ENCODE measurements at regions of chr1 and their contacts with region 1.

Region 1: DNA sequence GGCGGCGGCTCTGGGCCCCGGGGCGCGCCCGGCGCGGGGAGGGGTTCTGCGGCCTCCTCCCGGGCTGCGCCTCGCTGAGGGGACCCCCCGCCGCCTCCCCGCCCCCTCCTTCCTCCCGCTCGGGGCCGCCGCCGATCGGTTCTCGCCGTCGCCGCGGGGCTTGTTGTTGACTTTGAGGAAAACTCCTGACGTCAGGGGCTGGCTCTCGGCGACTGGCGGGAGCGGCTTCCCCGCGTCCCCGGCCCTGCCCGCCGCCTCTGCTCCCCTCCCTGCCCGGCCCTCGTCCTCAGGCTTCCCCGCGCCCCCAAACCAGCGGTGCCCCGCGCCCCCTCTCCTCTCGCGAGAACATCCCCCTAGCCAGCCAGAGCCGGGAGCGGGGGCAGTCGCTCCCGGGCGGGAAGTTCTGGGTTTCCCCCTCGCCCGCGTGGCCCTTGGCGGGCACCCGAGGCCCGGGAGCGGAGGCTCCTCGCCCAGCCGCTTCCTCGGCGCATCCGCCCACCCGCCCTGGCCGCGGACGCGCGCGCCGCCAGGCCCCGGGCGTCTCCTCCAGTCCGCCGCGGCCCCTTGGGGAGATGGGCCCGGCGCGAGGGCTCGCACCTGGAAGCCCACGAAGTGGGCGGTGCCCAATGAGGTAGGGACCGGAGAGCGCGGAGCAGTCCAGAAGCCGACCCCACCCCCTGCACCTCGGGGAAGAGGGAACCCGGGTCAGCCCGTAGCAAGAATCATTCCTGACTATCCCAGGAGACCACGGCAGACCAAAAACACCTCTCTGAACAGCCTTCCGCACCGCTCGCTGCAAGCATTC is 611 bp upstream of the AKT3 start:
- DNase-seq: peak; percentile 79 to 88 (median 84)
- ATAC-seq: peak; percentile 64
- H3K4me3 ChIP-seq: peak overlapping the region; percentile 75
- H3K4me3 Mint-ChIP-seq: peak overlapping the region; percentile 90 to 97 (median 93)
- H3K27ac ChIP-seq: peak overlapping the region; percentile 97
- H3K27ac Mint-ChIP-seq: peak overlapping the region; percentile 88 to 99 (median 93)
- H3K4me1 ChIP-seq: peaks cover 4 to 5% of the 10 kb centered on the region in 2 donors
- H3K4me1 Mint-ChIP-seq: peaks cover 8 to 47% (median 30%) of the 10 kb centered on the region in 7 donors
- H3K27me3 ChIP-seq: no peaks in the 10 kb centered on the region
- H3K27me3 Mint-ChIP-seq: peaks cover 0 to 59% (median 0%) of the 10 kb centered on the region in 5 donors

Region 2: DNA sequence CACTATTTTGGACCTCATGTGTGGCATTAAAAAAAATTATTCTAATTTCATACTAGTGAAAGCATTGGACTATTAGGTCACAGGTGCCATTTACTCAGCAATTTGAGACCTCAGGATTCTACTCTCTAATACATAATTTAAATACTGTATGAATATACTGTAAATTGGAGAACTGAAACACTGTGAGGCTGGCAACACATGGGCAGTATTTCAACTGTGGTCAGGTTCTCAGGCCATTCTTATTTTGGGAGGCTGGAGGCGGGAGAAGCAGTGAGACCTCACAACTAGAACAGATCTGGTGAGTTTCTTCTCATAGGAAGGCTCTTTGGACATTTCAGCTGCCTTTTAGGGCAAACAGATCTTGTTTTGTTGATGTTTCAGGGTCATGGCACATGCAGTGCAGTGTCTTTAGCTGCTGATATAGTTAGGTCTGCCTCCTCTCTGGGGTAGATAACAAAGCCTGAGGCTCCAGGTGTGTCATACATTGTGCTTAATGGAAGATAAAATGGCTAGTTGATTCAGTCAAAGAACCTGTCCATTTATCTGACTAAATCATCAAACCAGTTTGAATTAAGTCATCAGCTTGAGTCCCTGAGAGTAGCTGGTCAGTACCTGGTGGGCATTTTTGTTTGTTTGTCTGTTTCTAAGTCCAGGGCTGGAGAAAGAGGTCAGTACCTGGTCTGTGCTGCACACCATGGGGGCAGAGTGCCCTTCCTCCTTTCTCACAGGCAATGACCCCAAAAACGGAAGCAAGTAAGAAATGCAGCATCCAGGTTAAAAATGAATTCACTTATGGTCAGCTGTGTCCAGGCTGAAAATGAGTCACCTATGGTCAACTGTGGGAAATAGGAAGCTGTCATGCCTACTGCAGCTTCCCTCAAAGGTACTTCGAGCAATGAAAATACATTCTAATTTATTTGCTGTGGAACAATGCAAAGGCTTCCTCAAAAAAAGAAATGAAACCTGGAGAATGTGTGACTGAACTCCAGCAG is 378.6 kb before region 1 on chr1:
- CTCF ChIA-PET with region 1: no interaction called
- POLR2A ChIA-PET with region 1: no interaction called
- intact Hi-C with region 1: no loop called
- DNase-seq: no peak
- ATAC-seq: peak; percentile 60
- H3K4me3 ChIP-seq: no peak overlapping the region
- H3K4me3 Mint-ChIP-seq: peak overlapping the region in 2 of 10 donors; percentile 41 to 85
- H3K27ac ChIP-seq: no peak overlapping the region
- H3K27ac Mint-ChIP-seq: peak overlapping the region in 2 of 9 donors; percentile 26 to 63
- H3K4me1 ChIP-seq: no peaks in the 10 kb centered on the region
- H3K4me1 Mint-ChIP-seq: peaks cover 9 to 20% (median 13%) of the 10 kb centered on the region in 7 donors
- H3K27me3 ChIP-seq: no peaks in the 10 kb centered on the region
- H3K27me3 Mint-ChIP-seq: no peaks in the 10 kb centered on the region

Region 3: GRCh38 chr1:243596431-243597062 is 254.1 kb before region 1 on chr1:
- CTCF ChIA-PET with region 1: no interaction called
- POLR2A ChIA-PET with region 1: no interaction called
- intact Hi-C with region 1: loop called in 1 of 2 experiments (anchors 5 kb)
- DNase-seq: peak in 1 of 9 donors; percentile 36
- ATAC-seq: peak; percentile 81
- H3K4me3 ChIP-seq: no peak overlapping the region
- H3K4me3 Mint-ChIP-seq: peak overlapping the region in 4 of 10 donors; percentile 6 to 73 (median 44)
- H3K27ac ChIP-seq: no peak overlapping the region
- H3K27ac Mint-ChIP-seq: peak overlapping the region in 5 of 9 donors; percentile 28 to 89 (median 40)
- H3K4me1 ChIP-seq: peaks cover 4 to 19% of the 10 kb centered on the region in 2 donors
- H3K4me1 Mint-ChIP-seq: peaks cover 23 to 48% (median 32%) of the 10 kb centered on the region in 7 donors
- H3K27me3 ChIP-seq: no peaks in the 10 kb centered on the region
- H3K27me3 Mint-ChIP-seq: no peaks in the 10 kb centered on the region

Region 4: GRCh38 chr1:243837907-243838535 is 12.6 kb before region 1 on chr1:
- CTCF ChIA-PET with region 1: interaction called, 4 read pairs
- POLR2A ChIA-PET with region 1: interaction called, 12 read pairs
- intact Hi-C with region 1: loop called (anchors 1 kb)
- DNase-seq: peak in 7 of 9 donors; percentile 22 to 72 (median 49)
- ATAC-seq: peak; percentile 88
- H3K4me3 ChIP-seq: no peak overlapping the region
- H3K4me3 Mint-ChIP-seq: peak overlapping the region in 9 of 10 donors; percentile 22 to 74 (median 58)
- H3K27ac ChIP-seq: peak overlapping the region; percentile 40
- H3K27ac Mint-ChIP-seq: peak overlapping the region; percentile 65 to 94 (median 83)
- H3K4me1 ChIP-seq: peaks cover 10 to 29% of the 10 kb centered on the region in 2 donors
- H3K4me1 Mint-ChIP-seq: peaks cover 14 to 73% (median 59%) of the 10 kb centered on the region in 7 donors
- H3K27me3 ChIP-seq: no peaks in the 10 kb centered on the region
- H3K27me3 Mint-ChIP-seq: no peaks in the 10 kb centered on the region

Region 5: GRCh38 chr1:243864913-243865312 is 14.3 kb after region 1 on chr1:
- CTCF ChIA-PET with region 1: no interaction called
- POLR2A ChIA-PET with region 1: no interaction called
- intact Hi-C with region 1: no loop called
- DNase-seq: no peak
- ATAC-seq: no peak
- H3K4me3 ChIP-seq: no peak overlapping the region
- H3K4me3 Mint-ChIP-seq: no peak overlapping the region
- H3K27ac ChIP-seq: no peak overlapping the region
- H3K27ac Mint-ChIP-seq: no peak overlapping the region
- H3K4me1 ChIP-seq: no peaks in the 10 kb centered on the region
- H3K4me1 Mint-ChIP-seq: no peaks in the 10 kb centered on the region
- H3K27me3 ChIP-seq: no peaks in the 10 kb centered on the region
- H3K27me3 Mint-ChIP-seq: peaks cover 0 to 3% (median 1%) of the 10 kb centered on the region in 5 donors

Region 6: GRCh38 chr1:244074559-244075171 is 224.0 kb after region 1 on chr1:
- CTCF ChIA-PET with region 1: no interaction called
- POLR2A ChIA-PET with region 1: interaction called, 10 read pairs
- intact Hi-C with region 1: loop called in 1 of 2 experiments (anchors 1 kb)
- DNase-seq: peak; percentile 36 to 91 (median 86)
- ATAC-seq: peak; percentile 96
- H3K4me3 ChIP-seq: peak overlapping the region; percentile 45
- H3K4me3 Mint-ChIP-seq: peak overlapping the region; percentile 75 to 91 (median 88)
- H3K27ac ChIP-seq: peak overlapping the region; percentile 73
- H3K27ac Mint-ChIP-seq: peak overlapping the region; percentile 50 to 99 (median 97)
- H3K4me1 ChIP-seq: peaks cover 16 to 32% of the 10 kb centered on the region in 2 donors
- H3K4me1 Mint-ChIP-seq: peaks cover 19 to 64% (median 54%) of the 10 kb centered on the region in 7 donors
- H3K27me3 ChIP-seq: no peaks in the 10 kb centered on the region
- H3K27me3 Mint-ChIP-seq: peaks cover 0 to 20% (median 0%) of the 10 kb centered on the region in 5 donors

Region 7: DNA sequence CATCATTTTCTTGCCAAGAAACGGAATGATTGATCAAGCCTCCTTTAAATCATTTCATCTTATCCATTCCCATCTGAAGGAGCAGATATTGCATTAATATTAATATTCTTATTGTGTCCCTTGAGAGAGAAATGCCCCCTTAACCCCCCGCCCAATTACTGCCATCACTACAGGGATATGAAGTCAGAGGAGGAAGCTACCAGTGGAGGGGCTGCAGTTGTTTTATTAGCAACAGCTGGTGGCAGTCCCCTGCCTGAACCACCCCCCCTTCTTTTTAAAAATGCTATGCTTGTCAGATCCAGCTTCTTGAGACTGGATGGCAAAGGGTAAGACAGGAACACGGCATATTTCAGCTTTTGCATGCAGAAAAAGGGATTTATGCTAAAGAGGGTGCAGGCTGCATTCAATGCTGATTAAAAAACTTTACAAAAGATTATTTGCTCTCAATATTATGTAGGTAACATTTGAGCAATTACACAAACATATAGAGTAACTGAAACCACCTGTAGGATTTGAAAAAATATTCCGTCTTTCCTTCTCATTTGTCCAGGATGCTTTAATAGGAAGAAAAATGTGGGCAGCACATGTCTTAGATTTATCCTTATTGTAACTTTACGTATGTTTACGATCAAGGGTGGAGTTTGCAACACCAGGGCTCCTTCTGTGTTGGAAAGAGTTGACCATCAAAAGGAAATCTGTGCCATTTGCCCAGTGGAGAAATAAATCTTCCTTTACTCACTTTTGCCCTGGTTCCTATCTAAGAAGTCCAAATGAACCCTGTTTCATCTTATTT is 278.1 kb after region 1 on chr1:
- CTCF ChIA-PET with region 1: no interaction called
- POLR2A ChIA-PET with region 1: no interaction called
- intact Hi-C with region 1: no loop called
- DNase-seq: no peak
- ATAC-seq: no peak
- H3K4me3 ChIP-seq: no peak overlapping the region
- H3K4me3 Mint-ChIP-seq: no peak overlapping the region
- H3K27ac ChIP-seq: no peak overlapping the region
- H3K27ac Mint-ChIP-seq: no peak overlapping the region
- H3K4me1 ChIP-seq: no peaks in the 10 kb centered on the region
- H3K4me1 Mint-ChIP-seq: peaks cover 0 to 15% (median 4%) of the 10 kb centered on the region in 7 donors
- H3K27me3 ChIP-seq: no peaks in the 10 kb centered on the region
- H3K27me3 Mint-ChIP-seq: peaks cover 0 to 21% (median 0%) of the 10 kb centered on the region in 5 donors

Region 8: GRCh38 chr1:244319283-244320132 is 468.9 kb after region 1 on chr1:
- CTCF ChIA-PET with region 1: no interaction called
- POLR2A ChIA-PET with region 1: no interaction called
- intact Hi-C with region 1: loop called in 1 of 2 experiments (anchors 5 kb)
- DNase-seq: peak in 1 of 9 donors; percentile 62
- ATAC-seq: peak; percentile 86
- H3K4me3 ChIP-seq: peak overlapping the region; percentile 9
- H3K4me3 Mint-ChIP-seq: peak overlapping the region in 4 of 10 donors; percentile 20 to 76 (median 36)
- H3K27ac ChIP-seq: no peak overlapping the region
- H3K27ac Mint-ChIP-seq: peak overlapping the region in 6 of 9 donors; percentile 20 to 87 (median 53)
- H3K4me1 ChIP-seq: peaks cover 0 to 51% of the 10 kb centered on the region in 2 donors
- H3K4me1 Mint-ChIP-seq: peaks cover 8 to 49% (median 9%) of the 10 kb centered on the region in 7 donors
- H3K27me3 ChIP-seq: no peaks in the 10 kb centered on the region
- H3K27me3 Mint-ChIP-seq: no peaks in the 10 kb centered on the region